Panc1 (cell line): ENCODE measurements at regions of chr11 and their contacts with region 1.

Region 1: GRCh38 chr11:75328426-75329277 is 22.8 kb downstream of the ARRB1 start:
- DNase-seq: peak; percentile 76
- ATAC-seq: peak; percentile 82
- H3K4me3 ChIP-seq: peak overlapping the region in 1 of 2 experiments; percentile 10; a peak in 1 of 4 replicates
- H3K27ac ChIP-seq: peak overlapping the region; percentile 96
- H3K4me1 ChIP-seq: peaks cover 83% of the 10 kb centered on the region
- H3K27me3 ChIP-seq: no peaks in the 10 kb centered on the region
- CTCF ChIP-seq: peak; percentile 95; the same call in 1 of the 2 replicates

Region 2: GRCh38 chr11:74138572-74138971 is 1190.1 kb before region 1 on chr11:
- CTCF ChIA-PET with region 1: no interaction called
- POLR2A ChIA-PET with region 1: no interaction called
- in situ Hi-C with region 1: no loop called
- intact Hi-C with region 1: no loop called
- DNase-seq: peak; percentile 96
- ATAC-seq: peak; percentile 98
- H3K4me3 ChIP-seq: peak overlapping the region in 1 of 2 experiments; percentile 10; a peak in 1 of 4 replicates
- H3K27ac ChIP-seq: peak overlapping the region; percentile 98
- H3K4me1 ChIP-seq: peaks cover 81% of the 10 kb centered on the region
- H3K27me3 ChIP-seq: no peaks in the 10 kb centered on the region
- CTCF ChIP-seq: no peak

Region 3: GRCh38 chr11:75004215-75004614 is 324.4 kb before region 1 on chr11:
- CTCF ChIA-PET with region 1: no interaction called
- POLR2A ChIA-PET with region 1: interaction called, 13 read pairs
- in situ Hi-C with region 1: no loop called
- intact Hi-C with region 1: no loop called
- DNase-seq: no peak
- ATAC-seq: no peak
- H3K4me3 ChIP-seq: no peak overlapping the region
- H3K27ac ChIP-seq: no peak overlapping the region
- H3K4me1 ChIP-seq: no peaks in the 10 kb centered on the region
- H3K27me3 ChIP-seq: no peaks in the 10 kb centered on the region
- CTCF ChIP-seq: no peak

Region 4: DNA sequence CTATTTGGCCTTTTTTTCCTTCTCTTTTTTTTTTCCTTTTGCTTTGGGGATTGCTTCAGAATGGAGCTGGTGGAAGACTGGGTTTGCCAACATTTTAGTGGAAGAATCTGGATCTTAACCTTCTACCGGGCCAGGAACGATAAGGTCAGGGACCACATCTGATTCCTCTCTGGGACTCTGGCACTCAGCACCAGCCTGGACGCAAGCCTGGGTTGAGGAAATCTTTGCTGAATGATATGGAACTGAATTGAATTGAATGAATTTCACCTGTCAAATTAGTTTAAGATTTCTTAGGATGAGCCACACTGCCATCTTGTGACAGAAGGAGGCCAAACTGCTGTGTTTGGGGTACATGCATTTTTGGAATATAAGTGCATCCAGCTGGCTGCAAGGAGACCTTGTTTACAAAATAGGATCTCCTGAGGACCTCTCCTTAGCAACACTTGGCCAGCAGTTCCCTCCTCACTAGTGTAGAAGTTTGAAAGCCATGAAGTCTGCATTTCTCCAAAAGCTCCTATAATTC is 57.7 kb before region 1 on chr11:
- CTCF ChIA-PET with region 1: no interaction called
- POLR2A ChIA-PET with region 1: no interaction called
- in situ Hi-C with region 1: no loop called
- intact Hi-C with region 1: no loop called
- DNase-seq: no peak
- ATAC-seq: no peak
- H3K4me3 ChIP-seq: no peak overlapping the region
- H3K27ac ChIP-seq: no peak overlapping the region
- H3K4me1 ChIP-seq: no peaks in the 10 kb centered on the region
- H3K27me3 ChIP-seq: no peaks in the 10 kb centered on the region
- CTCF ChIP-seq: peak; percentile 62

Region 5: GRCh38 chr11:75342903-75343870 is 14.5 kb after region 1 on chr11:
- CTCF ChIA-PET with region 1: interaction called, 15 read pairs
- POLR2A ChIA-PET with region 1: interaction called, 6 read pairs
- in situ Hi-C with region 1: no loop called
- intact Hi-C with region 1: no loop called
- DNase-seq: no peak
- ATAC-seq: peak; percentile 3
- H3K4me3 ChIP-seq: 0 out of 4 replicates have a peak overlapping the region, but pooled peaks of 1 of the 2 experiments have one; percentile 11
- H3K27ac ChIP-seq: peak overlapping the region; percentile 96
- H3K4me1 ChIP-seq: peaks cover 100% of the 10 kb centered on the region
- H3K27me3 ChIP-seq: no peaks in the 10 kb centered on the region
- CTCF ChIP-seq: peak; percentile 50; the same call in 1 of the 2 replicates

Region 6: GRCh38 chr11:75365711-75366181 is 37.1 kb after region 1 on chr11:
- CTCF ChIA-PET with region 1: interaction called, 16 read pairs
- POLR2A ChIA-PET with region 1: no interaction called
- in situ Hi-C with region 1: no loop called
- intact Hi-C with region 1: no loop called
- DNase-seq: no peak
- ATAC-seq: peak; percentile 81
- H3K4me3 ChIP-seq: no peak overlapping the region
- H3K27ac ChIP-seq: no peak overlapping the region; the same call in 1 of the 2 replicates
- H3K4me1 ChIP-seq: 0 out of 2 replicates have a peak, but pooled peaks cover 4% of the 10 kb centered on the region
- H3K27me3 ChIP-seq: no peaks in the 10 kb centered on the region
- CTCF ChIP-seq: no peak

Region 7: DNA sequence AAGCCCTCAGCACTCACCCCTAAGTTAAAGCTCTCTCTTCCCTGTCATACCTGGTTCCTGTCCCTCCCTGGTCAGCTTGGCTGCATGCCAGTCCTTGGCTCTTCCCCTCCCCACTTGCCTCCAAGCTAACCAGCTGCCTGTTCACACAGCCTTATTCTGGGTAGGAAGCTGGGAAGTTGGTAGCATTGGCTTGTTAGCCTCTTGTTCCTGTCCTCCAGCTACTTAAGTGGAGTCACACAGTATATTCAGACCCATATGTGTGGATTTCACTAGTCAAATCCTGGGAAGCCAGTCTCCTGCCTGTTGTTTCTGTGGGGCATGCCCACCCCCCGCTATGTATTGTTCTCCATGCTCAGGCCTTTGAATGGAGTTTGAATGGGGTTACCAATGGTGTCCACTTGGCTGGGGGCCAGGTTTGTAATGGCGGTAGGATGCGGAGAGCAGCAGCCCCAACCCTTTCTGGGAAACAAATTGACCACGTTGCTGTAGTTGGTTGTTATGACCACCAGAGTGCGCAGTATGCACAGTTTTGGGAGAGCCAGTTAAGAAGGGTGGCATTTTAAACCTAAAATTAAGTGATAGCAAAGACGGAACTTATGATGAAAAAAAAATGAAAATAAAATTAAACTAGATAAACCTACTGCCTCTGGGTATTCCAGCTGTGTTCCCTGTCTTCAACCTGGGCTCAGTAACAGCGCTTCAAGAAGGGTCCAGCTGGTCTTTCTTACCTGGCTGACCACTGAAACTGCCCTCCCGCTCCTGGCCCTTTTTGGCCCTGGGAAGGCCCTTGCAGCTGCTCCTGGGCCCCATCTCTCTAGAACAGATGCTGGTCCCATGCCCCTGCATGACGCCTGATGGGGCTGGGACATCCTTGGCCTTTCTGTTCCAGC is 60.0 kb after region 1 on chr11:
- CTCF ChIA-PET with region 1: interaction called, 4 read pairs
- POLR2A ChIA-PET with region 1: interaction called, 3 read pairs
- in situ Hi-C with region 1: no loop called
- intact Hi-C with region 1: loop called (anchors 1 kb)
- DNase-seq: no peak
- ATAC-seq: peak; percentile 79
- H3K4me3 ChIP-seq: no peak overlapping the region
- H3K27ac ChIP-seq: peak overlapping the region; percentile 69
- H3K4me1 ChIP-seq: peaks cover 39% of the 10 kb centered on the region
- H3K27me3 ChIP-seq: no peaks in the 10 kb centered on the region
- CTCF ChIP-seq: peak; percentile 94